K562 (cell line): ENCODE measurements at regions of chr1 and their contacts with region 1.

Region 1: GRCh38 chr1:38834937-38835827 is 24.4 kb downstream of the RRAGC start:
- DNase-seq: peak; percentile 71 to 92 (median 78)
- ATAC-seq: peak; percentile 98
- H3K4me3 ChIP-seq: no peak overlapping the region
- H3K27ac ChIP-seq: no peak overlapping the region
- H3K4me1 ChIP-seq: peaks cover 0 to 9% of the 10 kb centered on the region in 2 experiments; a peak in 2 of 5 replicates
- H3K27me3 ChIP-seq: 0 out of 5 replicates have a peak, but pooled peaks cover 0 to 3% of the 10 kb centered on the region in 2 experiments
- CTCF ChIP-seq: peak; percentile 79 to 91 (median 86)
- EP300 ChIP-seq: no peak
- POLR2A ChIP-seq: no peak
- RAD21 ChIP-seq: peak; percentile 91 to 98

Region 2: GRCh38 chr1:38046884-38047602 is 788.1 kb before region 1 on chr1:
- CTCF ChIA-PET with region 1: no interaction called
- POLR2A ChIA-PET with region 1: no interaction called
- in situ Hi-C with region 1: loop called (anchors 5 kb)
- intact Hi-C with region 1: no loop called
- DNase-seq: peak; percentile 90 to 99 (median 98)
- ATAC-seq: peak; percentile 95
- H3K4me3 ChIP-seq: peak overlapping the region; percentile 49
- H3K27ac ChIP-seq: no peak overlapping the region
- H3K4me1 ChIP-seq: peaks cover 0 to 35% of the 10 kb centered on the region in 2 experiments; a peak in 3 of 5 replicates
- H3K27me3 ChIP-seq: peaks cover 24 to 48% of the 10 kb centered on the region in 2 experiments; a peak in 4 of 5 replicates
- CTCF ChIP-seq: no peak
- EP300 ChIP-seq: no peak
- POLR2A ChIP-seq: no peak
- RAD21 ChIP-seq: peak in 1 of 2 experiments; percentile 32; a peak in 1 of 4 replicates

Region 3: GRCh38 chr1:38451541-38451993 is 383.6 kb before region 1 on chr1:
- CTCF ChIA-PET with region 1: no interaction called
- POLR2A ChIA-PET with region 1: no interaction called
- in situ Hi-C with region 1: no loop called
- intact Hi-C with region 1: no loop called
- DNase-seq: peak in 3 of 4 experiments; percentile 21 to 48 (median 43)
- ATAC-seq: peak; percentile 66
- H3K4me3 ChIP-seq: no peak overlapping the region
- H3K27ac ChIP-seq: no peak overlapping the region
- H3K4me1 ChIP-seq: no peaks in the 10 kb centered on the region
- H3K27me3 ChIP-seq: peaks cover 19 to 68% of the 10 kb centered on the region in 2 experiments
- CTCF ChIP-seq: no peak
- EP300 ChIP-seq: no peak
- POLR2A ChIP-seq: no peak
- RAD21 ChIP-seq: no peak

Region 4: DNA sequence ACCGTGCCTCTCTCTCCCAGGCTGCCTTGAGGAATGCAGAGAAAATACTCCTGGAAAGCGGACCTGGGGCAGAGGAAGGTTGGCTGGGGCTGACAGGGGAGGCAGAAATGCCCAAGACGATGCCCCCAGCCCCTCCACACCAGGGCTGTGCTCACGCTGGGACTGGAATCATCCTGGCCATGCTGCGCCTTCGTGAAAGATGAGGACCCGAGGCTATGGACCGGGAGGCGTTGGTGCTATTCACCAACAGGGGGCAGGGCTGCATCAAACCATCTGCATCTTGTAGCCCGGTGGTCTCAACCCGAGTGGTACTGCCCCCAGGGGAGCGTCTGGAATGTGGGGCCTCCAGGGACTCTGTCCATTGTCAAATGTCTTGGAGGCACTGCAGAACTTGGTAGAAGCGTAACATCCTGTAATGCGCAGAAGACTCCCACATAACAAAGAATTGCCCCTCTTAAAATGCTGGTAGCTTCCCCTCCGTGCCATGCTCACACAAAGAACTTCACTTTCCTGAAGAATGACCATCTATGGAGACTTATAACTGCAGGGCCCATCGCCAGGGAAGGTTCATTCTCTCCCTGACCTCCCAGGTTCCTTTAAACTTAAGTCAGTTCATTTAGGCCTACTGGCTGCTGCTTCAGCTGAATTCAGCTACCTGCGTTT is 226.8 kb before region 1 on chr1:
- CTCF ChIA-PET with region 1: interaction called, 17 read pairs
- POLR2A ChIA-PET with region 1: no interaction called
- in situ Hi-C with region 1: no loop called
- intact Hi-C with region 1: loop called (anchors 5 kb)
- DNase-seq: peak; percentile 73 to 77 (median 74)
- ATAC-seq: peak; percentile 95
- H3K4me3 ChIP-seq: no peak overlapping the region
- H3K27ac ChIP-seq: no peak overlapping the region
- H3K4me1 ChIP-seq: peaks cover 6 to 10% of the 10 kb centered on the region in 2 experiments; a peak in 4 of 5 replicates
- H3K27me3 ChIP-seq: peaks cover 0 to 18% of the 10 kb centered on the region in 2 experiments; a peak in 2 of 5 replicates
- CTCF ChIP-seq: peak; percentile 84 to 87 (median 86)
- EP300 ChIP-seq: no peak
- POLR2A ChIP-seq: no peak
- RAD21 ChIP-seq: peak; percentile 82 to 88